HEK293 (cell line): ENCODE measurements at regions of chr20 and their contacts with region 1.

Region 1: DNA sequence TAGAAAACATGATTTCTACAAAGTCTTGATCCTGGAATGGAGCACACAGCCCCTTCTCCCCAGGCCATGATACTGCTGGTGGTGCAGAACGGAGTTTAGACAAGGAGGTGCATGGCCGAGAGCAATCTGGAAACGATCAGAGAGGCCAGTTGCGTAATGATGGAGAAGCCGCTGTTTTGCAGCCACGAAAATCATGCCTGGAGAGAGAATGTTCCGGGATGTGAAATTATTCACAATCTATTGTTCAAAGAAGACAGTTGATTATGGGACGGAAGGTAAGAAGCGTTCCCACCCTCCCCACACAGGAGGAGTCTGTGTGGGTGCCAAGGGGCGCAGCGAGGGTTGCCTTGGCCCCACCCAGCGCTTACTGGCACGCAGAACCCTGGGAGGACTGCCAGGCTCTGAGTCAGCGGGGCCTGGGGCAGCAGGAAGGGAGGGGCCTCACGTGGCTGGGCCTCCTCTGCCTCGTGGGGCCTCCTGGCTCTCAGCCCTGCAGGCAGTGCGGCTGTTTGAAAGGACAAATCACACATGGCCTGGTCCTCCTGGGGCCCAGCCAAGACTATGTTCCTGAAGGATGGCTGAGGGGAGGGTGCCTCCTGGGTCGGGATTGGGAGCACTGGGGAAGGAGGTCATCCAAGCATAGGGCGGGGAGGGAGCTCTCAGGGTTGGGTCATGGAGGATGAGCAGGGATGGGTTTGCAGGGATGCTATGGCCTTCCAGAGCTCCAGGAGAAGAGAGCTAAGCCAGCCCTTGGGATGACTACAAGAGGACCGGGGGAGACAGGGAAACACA is 8.7 kb upstream of the AP5S1 start:
- H3K4me3 ChIP-seq: peak overlapping the region; percentile 17
- H3K27ac ChIP-seq: peak overlapping the region; percentile 84
- H3K4me1 ChIP-seq: peaks cover 35% of the 10 kb centered on the region
- CTCF ChIP-seq: peak; percentile 9; the same call in 1 of the 2 replicates

Region 2: GRCh38 chr20:3795511-3796468 is 15.9 kb before region 1 on chr20 and contains the start of gene CDC25B:
- CTCF ChIA-PET with region 1: interaction called, 6 read pairs
- POLR2A ChIA-PET with region 1: interaction called, 26 read pairs
- H3K4me3 ChIP-seq: peak within 1 kb of the TSS; percentile 83
- H3K27ac ChIP-seq: peak within 1 kb of the TSS; percentile 92
- H3K4me1 ChIP-seq: peaks cover 12% of the 10 kb centered on the region
- CTCF ChIP-seq: peak; percentile 59